Natural killer cell (primary cell): ENCODE measurements at regions of chr6 and their contacts with region 1.

Region 1: DNA sequence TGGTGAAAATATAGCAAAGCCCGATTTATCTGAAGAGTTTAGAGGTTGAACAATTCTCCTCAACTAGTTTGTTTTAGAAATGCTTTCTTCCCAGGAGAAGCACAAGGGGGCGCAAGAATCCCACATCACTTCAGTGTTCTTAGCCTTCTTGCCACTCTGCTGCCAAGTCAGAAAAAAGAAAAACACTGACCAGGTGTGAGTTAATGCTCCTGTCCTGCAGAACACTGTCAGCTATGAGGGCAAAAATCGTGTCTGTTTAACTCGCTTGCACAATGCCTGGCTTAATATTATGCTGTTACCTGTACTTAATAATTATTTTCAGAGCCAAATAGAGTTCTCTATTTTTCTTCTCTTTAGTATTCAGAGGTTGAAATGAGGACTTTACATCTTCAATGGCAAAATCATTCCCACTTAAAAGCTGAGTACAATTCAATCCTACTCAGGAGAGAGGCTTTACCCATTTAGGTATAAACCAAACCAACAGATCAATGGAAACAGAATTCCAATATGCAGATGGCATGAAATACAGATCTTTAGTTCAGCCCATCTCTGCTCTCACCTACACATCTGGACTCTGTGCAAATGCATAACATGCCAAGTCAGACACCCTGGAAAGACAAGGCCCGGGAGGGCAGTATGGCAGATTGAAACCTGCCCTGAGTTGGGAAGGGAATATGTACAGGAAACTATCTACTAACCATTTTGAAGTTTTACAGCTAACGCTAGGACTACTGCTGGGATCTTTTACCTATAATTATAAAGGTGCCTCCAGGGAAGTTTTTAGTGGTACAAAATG is 71.4 kb upstream of the TULP1 start:
- DNase-seq: peak; percentile 60 to 90
- ATAC-seq: peak; percentile 72 to 82 (median 76)
- H3K4me3 ChIP-seq: no peak overlapping the region
- H3K4me3 Mint-ChIP-seq: no peak overlapping the region
- H3K27ac ChIP-seq: no peak overlapping the region
- H3K27ac Mint-ChIP-seq: no peak overlapping the region
- H3K4me1 ChIP-seq: no peaks in the 10 kb centered on the region
- H3K4me1 Mint-ChIP-seq: peaks cover 6 to 8% of the 10 kb centered on the region in 2 donors
- H3K27me3 ChIP-seq: no peaks in the 10 kb centered on the region
- H3K27me3 Mint-ChIP-seq: no peaks in the 10 kb centered on the region
- CTCF ChIP-seq: peak; percentile 97

Region 2: DNA sequence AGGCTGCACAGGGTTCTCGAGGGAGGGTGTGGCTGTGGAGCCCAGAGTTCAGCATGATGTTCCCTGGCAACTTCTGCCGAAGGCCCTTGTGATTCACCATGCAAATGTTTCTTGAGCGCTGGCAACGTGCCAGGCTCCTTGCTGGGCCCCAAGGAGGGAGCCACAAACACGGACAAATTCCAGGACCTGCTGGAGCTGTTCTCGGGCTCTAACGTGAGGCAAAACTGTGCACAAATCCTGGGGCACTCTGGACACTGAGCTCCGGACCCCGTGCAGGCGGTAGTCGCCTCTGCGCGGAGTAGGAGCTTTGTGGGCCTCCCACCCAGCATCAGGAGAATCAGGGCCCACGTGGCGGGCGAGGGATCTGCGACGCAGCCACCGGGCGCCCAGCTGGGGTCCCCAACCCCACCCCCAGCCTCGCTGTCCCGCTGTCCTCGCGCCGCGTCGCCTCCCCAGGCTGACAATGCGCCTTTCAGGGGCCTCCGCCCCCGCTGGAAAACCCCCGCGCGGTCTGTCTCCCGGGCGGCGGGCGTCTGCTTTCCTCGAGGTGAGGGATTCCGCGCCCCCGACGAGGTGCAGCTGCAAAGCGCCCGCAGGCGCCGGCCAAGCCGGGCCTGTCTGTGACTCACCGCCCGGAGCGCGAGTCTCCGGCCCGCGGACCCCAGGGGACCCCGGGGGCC is 402.0 kb before region 1 on chr6:
- intact Hi-C with region 1: no loop called
- DNase-seq: no peak
- ATAC-seq: peak in 1 of 3 donors; percentile 12
- H3K4me3 ChIP-seq: no peak overlapping the region
- H3K4me3 Mint-ChIP-seq: no peak overlapping the region
- H3K27ac ChIP-seq: no peak overlapping the region
- H3K27ac Mint-ChIP-seq: no peak overlapping the region
- H3K4me1 ChIP-seq: no peaks in the 10 kb centered on the region
- H3K4me1 Mint-ChIP-seq: no peaks in the 10 kb centered on the region
- H3K27me3 ChIP-seq: no peaks in the 10 kb centered on the region
- H3K27me3 Mint-ChIP-seq: peaks cover 14 to 16% of the 10 kb centered on the region in 2 donors
- CTCF ChIP-seq: no peak

Region 3: DNA sequence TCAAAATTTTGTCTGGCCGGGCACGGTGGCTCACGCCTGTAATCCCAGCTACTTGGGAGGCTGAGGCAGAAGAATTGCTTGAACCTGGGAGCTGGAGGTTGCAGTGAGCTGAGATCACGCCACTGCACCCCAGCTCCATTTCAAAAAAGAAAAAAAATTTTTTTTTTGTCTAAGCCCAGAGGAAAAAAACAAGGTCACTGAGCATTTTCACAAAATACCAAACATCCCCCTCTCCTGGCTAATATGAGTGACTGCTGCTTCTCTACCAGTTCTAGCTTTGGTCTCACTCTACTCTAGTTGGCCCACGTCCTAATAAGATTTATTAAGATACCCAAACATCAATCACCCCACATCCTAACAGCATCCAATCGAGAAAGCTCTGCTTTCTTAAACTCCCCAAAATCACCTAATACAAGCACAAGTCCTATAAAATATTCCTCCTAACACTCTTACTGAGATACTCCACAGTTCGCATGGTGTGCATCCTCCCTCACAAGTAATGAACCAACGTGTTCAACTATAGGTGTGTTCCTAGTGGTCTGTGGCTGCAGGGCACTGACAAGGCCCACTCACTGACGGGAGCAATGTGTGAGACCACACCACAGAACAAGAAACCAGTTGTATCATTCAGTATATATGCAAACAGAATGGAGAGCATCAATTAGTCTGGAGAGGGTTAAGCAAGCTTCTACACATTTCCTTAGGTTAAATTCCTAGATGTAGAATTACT is 40.4 kb after region 1 on chr6:
- intact Hi-C with region 1: loop called (anchors 1 kb)
- DNase-seq: peak in 1 of 2 donors; percentile 81
- ATAC-seq: peak; percentile 30 to 54 (median 49)
- H3K4me3 ChIP-seq: no peak overlapping the region
- H3K4me3 Mint-ChIP-seq: no peak overlapping the region
- H3K27ac ChIP-seq: no peak overlapping the region
- H3K27ac Mint-ChIP-seq: peak overlapping the region in 1 of 2 donors; percentile 35
- H3K4me1 ChIP-seq: peaks cover 7% of the 10 kb centered on the region
- H3K4me1 Mint-ChIP-seq: peaks cover 7 to 8% of the 10 kb centered on the region in 2 donors
- H3K27me3 ChIP-seq: no peaks in the 10 kb centered on the region
- H3K27me3 Mint-ChIP-seq: no peaks in the 10 kb centered on the region
- CTCF ChIP-seq: peak; percentile 34

Region 4: DNA sequence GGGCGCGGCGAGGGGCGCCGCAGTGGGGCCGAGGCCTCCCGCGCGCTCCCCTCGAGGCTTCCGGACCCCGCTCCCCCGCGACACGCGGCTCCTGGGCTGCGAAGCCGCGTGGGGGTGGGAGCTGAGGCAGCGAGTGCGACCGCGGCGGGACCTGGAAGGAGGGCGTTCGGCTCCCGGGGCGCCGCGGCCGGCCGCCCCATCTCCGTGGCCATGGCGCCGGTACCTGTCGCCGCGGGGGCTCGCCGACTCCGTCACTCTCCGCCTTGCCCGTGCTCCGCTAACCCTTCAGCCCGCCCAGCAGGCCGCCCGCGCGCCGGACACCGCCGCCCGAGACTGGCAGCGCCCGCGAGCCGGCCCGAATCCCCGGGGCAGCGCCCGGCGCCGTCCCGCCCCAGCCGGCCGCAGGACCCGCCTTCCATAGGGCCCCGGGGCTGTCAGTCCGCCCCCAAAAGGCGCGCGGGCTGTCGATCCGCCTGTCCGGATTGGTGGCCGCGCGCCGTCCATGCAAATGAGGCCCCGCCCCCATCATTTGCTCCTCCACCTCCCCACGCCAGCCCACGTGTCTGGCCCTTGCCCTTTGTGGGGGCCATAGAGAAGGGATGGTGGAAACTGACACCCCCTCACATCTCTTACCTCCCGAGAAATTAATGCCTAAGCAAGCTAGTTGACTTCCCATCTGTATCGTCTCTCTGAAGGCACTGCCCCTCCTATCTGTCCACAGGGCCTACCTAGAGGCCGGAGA is 104.7 kb after region 1 on chr6 and contains the start of gene FKBP5:
- intact Hi-C with region 1: loop called (anchors 1 kb)
- DNase-seq: peak; percentile 89 to 92
- ATAC-seq: peak; percentile 94 to 98 (median 95)
- H3K4me3 ChIP-seq: peak within 1 kb of the TSS; percentile 67
- H3K4me3 Mint-ChIP-seq: peak within 1 kb of the TSS; percentile 99
- H3K27ac ChIP-seq: peak within 1 kb of the TSS; percentile 58
- H3K27ac Mint-ChIP-seq: peak within 1 kb of the TSS; percentile 84 to 96
- H3K4me1 ChIP-seq: peaks cover 6% of the 10 kb centered on the region
- H3K4me1 Mint-ChIP-seq: peaks cover 17 to 22% of the 10 kb centered on the region in 2 donors
- H3K27me3 ChIP-seq: no peaks in the 10 kb centered on the region
- H3K27me3 Mint-ChIP-seq: no peaks in the 10 kb centered on the region
- CTCF ChIP-seq: no peak
- total RNA-seq, gene FKBP5: 15.5 to 30.2 (median 27.3) TPM

Region 5: GRCh38 chr6:35736253-35736894 is 152.3 kb after region 1 on chr6:
- intact Hi-C with region 1: loop called (anchors 1 kb)
- DNase-seq: peak; percentile 79 to 92
- ATAC-seq: peak; percentile 39 to 60 (median 48)
- H3K4me3 ChIP-seq: no peak overlapping the region
- H3K4me3 Mint-ChIP-seq: no peak overlapping the region
- H3K27ac ChIP-seq: no peak overlapping the region
- H3K27ac Mint-ChIP-seq: no peak overlapping the region
- H3K4me1 ChIP-seq: peaks cover 37% of the 10 kb centered on the region
- H3K4me1 Mint-ChIP-seq: peaks cover 26 to 35% of the 10 kb centered on the region in 2 donors
- H3K27me3 ChIP-seq: no peaks in the 10 kb centered on the region
- H3K27me3 Mint-ChIP-seq: no peaks in the 10 kb centered on the region
- CTCF ChIP-seq: peak; percentile 87